ENCODE measurements at regions of chr19 and their contacts with region 1.

Region 1: GRCh38 chr19:3762501-3763459 is at the start of gene MRPL54:
- DNase-seq: peak; percentile 99 to 100 (median 100)
- H3K4me3 ChIP-seq: peak within 1 kb of the TSS; percentile 91 to 98
- H3K4me3 Mint-ChIP-seq: peak within 1 kb of the TSS; percentile 96 to 99 (median 98)
- H3K27ac ChIP-seq: peak within 1 kb of the TSS; percentile 100
- H3K27ac Mint-ChIP-seq: peak within 1 kb of the TSS; percentile 100
- H3K4me1 ChIP-seq: peaks cover 43% of the 10 kb centered on the region
- H3K4me1 Mint-ChIP-seq: peaks cover 16 to 55% (median 33%) of the 10 kb centered on the region in 4 donors
- H3K27me3 ChIP-seq: no peaks in the 10 kb centered on the region
- H3K27me3 Mint-ChIP-seq: peaks cover 0 to 2% of the 10 kb centered on the region in 2 donors
- total RNA-seq, gene MRPL54: 36.7 to 38.6 TPM

Region 2: DNA sequence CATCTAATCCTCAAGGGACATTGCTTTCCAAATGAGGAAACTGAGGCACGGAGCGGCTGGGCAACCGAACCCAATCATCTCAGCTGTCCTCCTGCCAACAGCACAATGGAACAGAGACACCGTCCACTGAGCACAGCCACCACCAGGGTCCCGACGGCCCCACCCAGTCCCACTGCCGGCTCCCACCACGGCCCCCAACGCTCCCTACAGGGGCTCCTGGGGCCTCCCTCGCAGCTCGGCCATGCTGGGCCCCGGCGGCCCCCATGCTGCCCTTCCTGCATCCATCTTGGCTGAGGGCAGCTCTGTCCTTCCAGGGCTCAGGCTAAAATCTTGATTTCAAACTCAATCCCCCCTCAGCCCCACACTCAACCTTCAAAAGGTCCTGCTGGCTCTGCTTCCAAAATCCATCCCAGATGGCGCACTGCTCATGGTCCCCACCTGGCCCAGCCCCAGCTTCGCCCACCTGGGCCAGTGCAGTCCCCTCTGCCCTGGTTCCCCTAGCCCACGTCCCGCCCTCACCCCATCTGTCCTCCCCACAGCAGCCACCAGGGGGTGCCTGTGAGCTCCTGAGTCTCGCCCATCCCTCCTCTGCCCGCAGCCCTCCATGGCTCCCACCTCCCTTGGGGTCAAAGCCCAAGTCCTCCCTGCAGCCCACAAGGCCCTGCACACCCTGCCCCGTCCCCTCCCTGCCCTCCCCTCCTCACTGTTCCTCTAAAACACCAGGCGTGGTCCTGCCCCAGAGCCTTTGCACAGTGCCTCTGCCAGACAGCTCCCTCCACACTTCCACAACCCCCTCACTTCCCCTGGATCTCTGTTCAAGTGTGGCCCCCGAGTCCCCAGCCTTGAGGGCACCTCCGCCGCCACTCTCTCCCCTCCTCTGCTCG is 70.4 kb before region 1 on chr19:
- CTCF ChIA-PET with region 1: interaction called, 10 read pairs
- POLR2A ChIA-PET with region 1: interaction called, 18 read pairs
- intact Hi-C with region 1: no loop called
- DNase-seq: peak; percentile 34 to 56 (median 43)
- H3K4me3 ChIP-seq: no peak overlapping the region
- H3K4me3 Mint-ChIP-seq: peak overlapping the region in 1 of 8 donors; percentile 43
- H3K27ac ChIP-seq: no peak overlapping the region
- H3K27ac Mint-ChIP-seq: peak overlapping the region in 4 of 7 donors; percentile 27 to 70 (median 48)
- H3K4me1 ChIP-seq: peaks cover 23% of the 10 kb centered on the region
- H3K4me1 Mint-ChIP-seq: peaks cover 19 to 47% (median 31%) of the 10 kb centered on the region in 4 donors
- H3K27me3 ChIP-seq: no peaks in the 10 kb centered on the region
- H3K27me3 Mint-ChIP-seq: no peaks in the 10 kb centered on the region

Region 3: GRCh38 chr19:3738477-3739220 is 24.1 kb before region 1 on chr19:
- CTCF ChIA-PET with region 1: interaction called, 4 read pairs
- POLR2A ChIA-PET with region 1: interaction called, 28 read pairs
- intact Hi-C with region 1: no loop called
- DNase-seq: peak in 1 of 5 donors; percentile 13
- H3K4me3 ChIP-seq: no peak overlapping the region
- H3K4me3 Mint-ChIP-seq: peak overlapping the region in 3 of 8 donors; percentile 7 to 76 (median 38)
- H3K27ac ChIP-seq: no peak overlapping the region
- H3K27ac Mint-ChIP-seq: peak overlapping the region in 6 of 7 donors; percentile 57 to 90 (median 84)
- H3K4me1 ChIP-seq: peaks cover 13% of the 10 kb centered on the region
- H3K4me1 Mint-ChIP-seq: peaks cover 5 to 19% (median 10%) of the 10 kb centered on the region in 4 donors
- H3K27me3 ChIP-seq: no peaks in the 10 kb centered on the region
- H3K27me3 Mint-ChIP-seq: no peaks in the 10 kb centered on the region

Region 4: DNA sequence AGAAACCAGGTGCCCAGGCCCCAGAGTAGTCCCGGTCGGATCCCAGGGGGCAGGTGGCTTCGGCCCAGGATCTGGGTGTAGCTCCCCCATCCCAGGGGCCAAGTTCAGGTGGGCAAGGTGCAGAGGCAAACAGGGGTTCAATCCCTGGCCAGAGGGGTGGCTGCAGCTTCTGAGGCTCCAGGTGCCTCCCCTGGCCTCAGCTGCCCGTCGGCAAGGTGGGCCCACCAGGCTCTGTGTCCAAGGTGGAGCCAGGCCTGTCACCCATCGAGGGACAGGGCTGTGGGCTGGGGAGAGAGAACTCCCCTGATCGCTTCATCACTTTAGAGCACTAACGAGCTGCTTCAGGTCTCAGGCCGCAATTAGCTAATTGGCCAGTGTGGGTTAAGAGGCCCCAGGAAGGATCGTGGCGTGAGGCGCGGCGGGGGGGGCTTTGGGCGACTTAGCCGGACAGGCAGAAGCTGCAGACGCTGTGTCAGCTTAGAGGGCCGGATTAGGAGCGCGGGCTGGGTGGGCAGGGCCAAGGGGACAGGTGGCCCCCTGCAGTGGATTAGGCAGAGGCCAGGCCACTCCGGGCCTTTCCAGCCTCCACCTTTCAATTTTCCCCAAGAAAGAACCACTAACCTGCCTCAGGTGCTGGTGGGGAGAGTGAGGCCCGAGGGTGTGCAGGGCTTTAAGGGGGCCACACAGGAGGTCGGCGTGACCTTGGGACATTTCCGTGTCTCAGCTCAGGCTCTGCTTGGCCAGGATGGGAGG is 12.0 kb after region 1 on chr19:
- CTCF ChIA-PET with region 1: interaction called, 5 read pairs
- POLR2A ChIA-PET with region 1: interaction called, 11 read pairs
- intact Hi-C with region 1: no loop called
- DNase-seq: peak in 1 of 5 donors; percentile 27
- H3K4me3 ChIP-seq: no peak overlapping the region
- H3K4me3 Mint-ChIP-seq: no peak overlapping the region
- H3K27ac ChIP-seq: no peak overlapping the region
- H3K27ac Mint-ChIP-seq: peak overlapping the region in 2 of 7 donors; percentile 57 to 62
- H3K4me1 ChIP-seq: no peaks in the 10 kb centered on the region
- H3K4me1 Mint-ChIP-seq: peaks cover 0 to 2% (median under 1%) of the 10 kb centered on the region in 4 donors
- H3K27me3 ChIP-seq: no peaks in the 10 kb centered on the region
- H3K27me3 Mint-ChIP-seq: no peaks in the 10 kb centered on the region

Region 5: GRCh38 chr19:3809881-3810707 is 47.3 kb after region 1 on chr19:
- CTCF ChIA-PET with region 1: interaction called, 17 read pairs
- POLR2A ChIA-PET with region 1: interaction called, 46 read pairs
- intact Hi-C with region 1: loop called (anchors 2 kb)
- DNase-seq: peak in 1 of 5 donors; percentile 19
- H3K4me3 ChIP-seq: no peak overlapping the region
- H3K4me3 Mint-ChIP-seq: no peak overlapping the region
- H3K27ac ChIP-seq: no peak overlapping the region
- H3K27ac Mint-ChIP-seq: peak overlapping the region in 2 of 7 donors; percentile 68 to 86
- H3K4me1 ChIP-seq: peaks cover 33% of the 10 kb centered on the region
- H3K4me1 Mint-ChIP-seq: peaks cover 26 to 50% (median 36%) of the 10 kb centered on the region in 4 donors
- H3K27me3 ChIP-seq: no peaks in the 10 kb centered on the region
- H3K27me3 Mint-ChIP-seq: no peaks in the 10 kb centered on the region

Region 6: DNA sequence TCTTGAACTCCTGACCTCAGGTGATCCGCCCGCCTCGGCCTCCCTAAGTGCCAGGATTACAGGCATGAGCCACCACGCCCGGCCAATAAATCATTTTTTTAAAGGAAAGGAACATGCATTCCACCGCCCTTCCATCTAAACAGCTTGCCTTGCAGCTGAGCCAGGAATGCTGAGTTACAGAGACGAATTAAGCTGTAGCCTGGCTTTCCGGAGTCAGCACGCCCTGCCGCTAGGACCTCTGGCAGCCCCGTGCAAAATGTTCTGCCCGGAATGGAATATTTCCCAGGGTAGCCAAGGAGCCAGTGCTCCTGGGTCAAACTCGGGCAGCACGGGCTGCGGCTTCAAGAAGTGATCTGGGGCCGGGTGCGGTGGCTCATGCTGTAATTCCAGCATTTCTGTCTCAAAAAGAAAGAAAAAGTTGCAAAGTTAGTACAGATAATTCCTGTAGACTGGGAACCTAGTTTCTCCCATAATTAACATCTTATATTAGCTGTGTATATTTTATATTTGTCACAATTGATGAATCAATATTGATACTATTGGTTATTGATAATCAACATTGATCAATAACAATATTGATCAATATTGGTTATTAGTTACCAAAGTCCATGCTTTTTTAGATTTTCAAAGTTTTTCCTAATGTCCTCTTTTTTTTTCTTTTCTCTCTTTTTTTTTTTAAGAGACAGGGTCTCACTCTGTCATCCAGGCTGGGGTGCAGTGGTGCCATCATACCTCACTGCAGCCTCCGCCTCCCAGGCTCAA is 136.9 kb after region 1 on chr19:
- CTCF ChIA-PET with region 1: no interaction called
- POLR2A ChIA-PET with region 1: no interaction called
- intact Hi-C with region 1: no loop called
- DNase-seq: no peak
- H3K4me3 ChIP-seq: no peak overlapping the region
- H3K4me3 Mint-ChIP-seq: no peak overlapping the region
- H3K27ac ChIP-seq: no peak overlapping the region
- H3K27ac Mint-ChIP-seq: no peak overlapping the region
- H3K4me1 ChIP-seq: no peaks in the 10 kb centered on the region
- H3K4me1 Mint-ChIP-seq: peaks cover 0 to 6% (median 4%) of the 10 kb centered on the region in 4 donors
- H3K27me3 ChIP-seq: no peaks in the 10 kb centered on the region
- H3K27me3 Mint-ChIP-seq: peaks cover 3 to 5% of the 10 kb centered on the region in 2 donors

Region 7: DNA sequence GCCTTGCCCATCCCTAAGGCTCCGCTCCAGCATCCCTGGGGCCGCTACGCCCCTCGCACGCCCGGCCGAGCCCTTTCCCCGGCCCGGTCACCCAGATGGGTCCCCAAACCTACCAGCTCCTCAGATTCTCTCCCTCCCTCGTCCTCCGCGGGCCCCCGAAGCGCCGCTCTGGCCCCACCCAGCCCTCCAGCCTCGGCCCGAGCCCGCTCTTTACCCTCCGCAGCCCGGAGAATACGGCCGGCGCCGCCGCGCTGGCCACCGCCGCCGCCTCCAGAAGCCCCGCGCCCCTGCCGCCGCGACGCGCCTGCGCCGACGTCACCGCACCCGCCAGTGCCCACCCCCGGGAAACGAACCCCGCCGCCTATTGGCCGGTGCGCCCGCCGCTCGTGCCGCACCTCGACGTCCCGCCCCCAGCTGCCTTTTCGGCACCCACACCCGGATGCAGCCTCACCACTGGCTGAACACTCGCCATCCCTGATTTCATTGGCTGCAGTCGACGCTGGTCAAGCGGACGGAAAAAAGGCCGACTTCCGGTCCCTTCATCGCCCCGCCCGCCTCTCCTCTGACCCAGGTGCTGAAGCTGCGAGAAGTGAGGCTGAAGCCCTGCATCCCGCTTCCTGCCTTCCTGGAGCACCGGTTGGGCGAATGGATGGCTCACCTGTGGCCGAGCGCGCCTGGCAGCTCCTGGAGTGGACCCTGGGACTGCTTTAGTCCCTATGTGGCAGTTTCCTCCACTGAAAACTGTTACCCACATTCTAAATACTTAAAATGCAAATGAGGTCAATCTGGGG is 208.2 kb after region 1 on chr19 and contains the start of gene DAPK3:
- CTCF ChIA-PET with region 1: no interaction called
- POLR2A ChIA-PET with region 1: interaction called, 4 read pairs
- intact Hi-C with region 1: loop called (anchors 2 kb)
- DNase-seq: peak; percentile 85 to 87 (median 85)
- H3K4me3 ChIP-seq: peak within 1 kb of the TSS; percentile 74 to 78
- H3K4me3 Mint-ChIP-seq: peak within 1 kb of the TSS; percentile 87 to 92 (median 91)
- H3K27ac ChIP-seq: peak within 1 kb of the TSS; percentile 86
- H3K27ac Mint-ChIP-seq: peak within 1 kb of the TSS; percentile 90 to 94 (median 92)
- H3K4me1 ChIP-seq: peaks cover 25% of the 10 kb centered on the region
- H3K4me1 Mint-ChIP-seq: peaks cover 11 to 34% (median 25%) of the 10 kb centered on the region in 4 donors
- H3K27me3 ChIP-seq: no peaks in the 10 kb centered on the region
- H3K27me3 Mint-ChIP-seq: no peaks in the 10 kb centered on the region
- total RNA-seq, gene DAPK3: 40.0 to 40.7 TPM

Region 8: DNA sequence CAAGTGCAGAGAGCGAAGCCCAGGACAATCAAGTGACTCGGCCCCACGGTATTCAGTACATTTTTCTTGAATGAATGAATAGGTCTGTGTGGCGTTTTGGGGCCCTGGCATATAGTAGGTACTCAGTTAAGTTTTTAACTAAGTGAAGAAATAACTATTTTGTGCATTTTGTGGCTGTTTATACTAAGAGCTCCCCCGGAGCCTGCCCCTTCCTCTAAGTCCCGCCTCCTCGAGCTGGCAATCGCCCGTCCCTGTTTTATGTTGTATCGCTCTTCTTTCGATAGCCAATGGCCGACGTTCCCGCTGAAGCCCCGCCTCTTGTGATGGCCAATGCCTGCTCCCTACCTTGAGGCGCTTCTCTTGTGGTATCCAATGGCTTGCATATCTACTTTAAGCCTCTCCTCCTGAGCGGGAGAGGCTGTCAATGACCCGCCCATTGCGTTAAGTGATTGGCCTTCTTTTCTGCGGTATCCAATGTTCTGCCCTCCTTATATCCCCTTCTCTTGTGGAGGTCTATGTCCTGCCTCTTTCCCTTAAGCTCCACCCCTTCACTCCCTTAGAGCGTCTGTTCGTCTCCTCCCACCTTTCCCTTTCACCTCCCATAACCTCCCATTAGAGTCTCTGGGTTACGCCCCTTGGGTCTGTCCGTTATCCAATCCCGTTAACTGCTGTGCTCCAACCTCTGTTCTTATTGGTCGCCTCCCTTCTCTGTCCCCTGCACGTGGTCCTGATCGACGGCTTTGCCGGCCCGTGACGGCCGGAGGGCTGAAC is 708.8 kb after region 1 on chr19:
- CTCF ChIA-PET with region 1: no interaction called
- POLR2A ChIA-PET with region 1: interaction called, 3 read pairs
- intact Hi-C with region 1: loop called (anchors 5 kb)
- DNase-seq: peak; percentile 96 to 100 (median 99)
- H3K4me3 ChIP-seq: peak overlapping the region; percentile 27 to 68
- H3K4me3 Mint-ChIP-seq: no peak overlapping the region
- H3K27ac ChIP-seq: peak overlapping the region; percentile 74
- H3K27ac Mint-ChIP-seq: no peak overlapping the region
- H3K4me1 ChIP-seq: peaks cover 30% of the 10 kb centered on the region
- H3K4me1 Mint-ChIP-seq: peaks cover 9 to 26% (median 16%) of the 10 kb centered on the region in 4 donors
- H3K27me3 ChIP-seq: no peaks in the 10 kb centered on the region
- H3K27me3 Mint-ChIP-seq: no peaks in the 10 kb centered on the region